ENCODE measurements at regions of chr5 and their contacts with region 1.

Region 1: GRCh38 chr5:177317959-177318377 is 6.3 kb upstream of the MXD3 start:
- DNase-seq: peak; percentile 80
- ATAC-seq: peak; percentile 92
- H3K4me3 ChIP-seq: no peak overlapping the region
- H3K27ac ChIP-seq: no peak overlapping the region
- H3K4me1 ChIP-seq: peaks cover under 1% of the 10 kb centered on the region; the same call in 1 of the 2 replicates
- H3K27me3 ChIP-seq: no peaks in the 10 kb centered on the region
- CTCF ChIP-seq: peak; percentile 95
- POLR2A ChIP-seq: no peak
- RAD21 ChIP-seq: peak; percentile 88

Region 2: DNA sequence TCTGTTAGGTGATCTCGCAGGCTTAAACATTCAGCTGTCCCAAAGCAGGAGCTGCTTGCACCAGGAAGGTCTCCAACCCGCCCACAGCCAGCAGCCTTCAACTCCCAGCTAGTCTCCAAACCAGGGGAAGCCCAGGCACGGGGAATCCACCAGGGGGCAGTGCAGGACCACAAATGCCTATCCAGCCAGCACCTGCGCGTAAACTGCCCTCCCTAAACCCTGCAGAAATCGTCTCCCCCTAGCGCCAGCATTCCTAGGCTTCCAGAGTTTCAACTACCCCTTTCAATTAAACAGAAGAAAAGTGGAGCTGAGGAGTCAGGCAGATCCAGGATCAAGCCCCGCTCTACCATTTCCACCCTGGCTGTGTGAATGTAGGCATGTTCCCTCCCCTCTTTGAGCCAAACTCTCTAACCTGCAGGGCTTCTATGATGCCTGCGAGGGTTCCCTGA is 1588.1 kb before region 1 on chr5:
- CTCF ChIA-PET with region 1: no interaction called
- POLR2A ChIA-PET with region 1: no interaction called
- dilution Hi-C with region 1: no loop called
- in situ Hi-C with region 1: no loop called
- intact Hi-C with region 1: no loop called
- DNase-seq: peak; percentile 85
- ATAC-seq: peak; percentile 99
- H3K4me3 ChIP-seq: no peak overlapping the region
- H3K27ac ChIP-seq: no peak overlapping the region
- H3K4me1 ChIP-seq: no peaks in the 10 kb centered on the region
- H3K27me3 ChIP-seq: no peaks in the 10 kb centered on the region; the same call in 1 of the 2 replicates
- CTCF ChIP-seq: peak; percentile 99
- POLR2A ChIP-seq: peak; percentile 60
- RAD21 ChIP-seq: peak; percentile 100

Region 3: GRCh38 chr5:176784218-176785165 is 533.5 kb before region 1 on chr5:
- CTCF ChIA-PET with region 1: no interaction called
- POLR2A ChIA-PET with region 1: no interaction called
- dilution Hi-C with region 1: no loop called
- in situ Hi-C with region 1: no loop called
- intact Hi-C with region 1: no loop called
- DNase-seq: peak; percentile 78
- ATAC-seq: peak; percentile 29; the same call in 1 of the 2 replicates
- H3K4me3 ChIP-seq: no peak overlapping the region
- H3K27ac ChIP-seq: no peak overlapping the region
- H3K4me1 ChIP-seq: peaks cover 2% of the 10 kb centered on the region; the same call in 1 of the 2 replicates
- H3K27me3 ChIP-seq: peaks cover 58% of the 10 kb centered on the region
- CTCF ChIP-seq: no peak
- POLR2A ChIP-seq: no peak
- RAD21 ChIP-seq: no peak

Region 4: GRCh38 chr5:177006265-177006972 is 311.5 kb before region 1 on chr5 and contains the start of gene UIMC1:
- CTCF ChIA-PET with region 1: no interaction called
- POLR2A ChIA-PET with region 1: no interaction called
- dilution Hi-C with region 1: no loop called
- in situ Hi-C with region 1: no loop called
- intact Hi-C with region 1: no loop called
- DNase-seq: peak; percentile 88
- ATAC-seq: peak; percentile 94
- H3K4me3 ChIP-seq: peak within 1 kb of the TSS; percentile 79
- H3K27ac ChIP-seq: peak within 1 kb of the TSS; percentile 91
- H3K4me1 ChIP-seq: peaks cover 5% of the 10 kb centered on the region; the same call in 1 of the 2 replicates
- H3K27me3 ChIP-seq: no peaks in the 10 kb centered on the region
- CTCF ChIP-seq: no peak
- POLR2A ChIP-seq: peak; percentile 76
- RAD21 ChIP-seq: no peak
- total RNA-seq, gene UIMC1: 23.1 and 27.6 TPM in 2 replicates

Region 5: DNA sequence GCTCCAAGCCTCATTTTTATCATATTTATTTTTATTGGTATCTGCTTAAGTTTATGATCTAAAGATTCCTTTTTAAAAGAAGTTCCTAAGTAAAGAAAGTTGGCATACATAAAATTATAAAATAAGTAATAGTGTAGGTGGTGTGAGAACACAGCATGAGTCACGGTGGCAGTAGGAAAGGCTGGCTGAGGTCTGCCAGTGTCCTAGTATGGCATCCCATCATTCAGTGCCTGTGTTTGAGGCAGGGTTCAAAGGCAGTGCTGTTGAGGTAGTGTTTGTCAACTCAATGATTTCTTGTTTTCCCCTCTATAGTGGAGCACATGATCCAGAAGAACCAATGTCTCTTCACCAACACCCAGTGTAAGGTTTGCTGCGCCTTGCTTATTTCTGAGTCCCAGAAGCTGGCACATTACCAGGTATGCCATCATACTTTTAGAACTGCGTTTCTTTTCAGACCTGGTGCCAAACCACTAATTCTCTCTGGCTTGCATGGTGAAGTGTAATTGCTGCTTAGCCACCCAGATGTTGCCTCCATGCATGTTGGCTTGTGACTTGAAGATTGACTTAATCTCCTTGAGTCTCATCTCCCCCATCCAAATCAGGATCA is 277.1 kb before region 1 on chr5:
- CTCF ChIA-PET with region 1: no interaction called
- POLR2A ChIA-PET with region 1: no interaction called
- dilution Hi-C with region 1: no loop called
- in situ Hi-C with region 1: no loop called
- intact Hi-C with region 1: no loop called
- DNase-seq: peak; percentile 45
- ATAC-seq: no peak; the same call in 1 of the 2 replicates
- H3K4me3 ChIP-seq: no peak overlapping the region
- H3K27ac ChIP-seq: no peak overlapping the region
- H3K4me1 ChIP-seq: peaks cover 2% of the 10 kb centered on the region
- H3K27me3 ChIP-seq: no peaks in the 10 kb centered on the region
- CTCF ChIP-seq: no peak
- POLR2A ChIP-seq: no peak
- RAD21 ChIP-seq: no peak

Region 6: GRCh38 chr5:177336112-177336511 is 18.1 kb after region 1 on chr5:
- CTCF ChIA-PET with region 1: no interaction called
- POLR2A ChIA-PET with region 1: no interaction called
- dilution Hi-C with region 1: no loop called
- in situ Hi-C with region 1: no loop called
- intact Hi-C with region 1: loop called (anchors 2 kb)
- DNase-seq: no peak
- ATAC-seq: peak; percentile 56
- H3K4me3 ChIP-seq: no peak overlapping the region
- H3K27ac ChIP-seq: no peak overlapping the region
- H3K4me1 ChIP-seq: no peaks in the 10 kb centered on the region
- H3K27me3 ChIP-seq: no peaks in the 10 kb centered on the region
- CTCF ChIP-seq: peak; percentile 43
- POLR2A ChIP-seq: no peak
- RAD21 ChIP-seq: peak; percentile 24; the same call in 1 of the 2 replicates

Region 7: DNA sequence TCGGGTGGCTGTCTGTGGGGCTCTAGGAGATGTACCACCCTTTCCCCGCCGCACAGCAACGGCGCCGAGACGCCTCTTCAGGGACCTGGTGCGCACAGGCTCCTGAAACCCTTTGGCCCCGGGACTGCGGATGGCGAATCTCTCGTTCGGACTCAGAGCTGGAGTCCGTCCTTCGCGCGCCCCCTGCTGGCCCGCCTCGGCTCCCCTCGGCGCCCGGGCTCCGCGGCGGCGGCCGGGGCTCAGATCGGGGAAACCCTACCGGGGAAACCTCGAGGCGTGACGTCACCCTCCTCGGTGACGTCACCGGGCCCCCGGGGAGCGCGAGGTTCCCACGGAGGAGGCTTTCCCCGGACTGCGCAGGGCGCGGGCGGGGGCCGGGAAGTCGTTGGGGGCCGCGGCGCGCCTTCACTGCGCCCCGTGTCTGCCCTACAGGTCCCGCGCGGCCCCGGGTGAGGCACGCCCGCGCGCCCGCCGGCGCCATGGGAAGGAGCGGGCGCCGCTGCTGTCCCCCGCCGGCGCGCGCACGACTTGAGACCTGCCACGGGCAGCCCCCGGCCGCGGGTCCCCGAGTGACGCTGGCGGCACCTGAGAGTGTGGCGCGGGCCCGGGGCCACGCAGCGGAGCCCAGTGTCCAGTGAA is 136.5 kb after region 1 on chr5:
- CTCF ChIA-PET with region 1: no interaction called
- POLR2A ChIA-PET with region 1: no interaction called
- dilution Hi-C with region 1: no loop called
- in situ Hi-C with region 1: loop called (anchors 5 kb)
- intact Hi-C with region 1: loop called (anchors 1 kb)
- DNase-seq: peak; percentile 80
- ATAC-seq: peak; percentile 58
- H3K4me3 ChIP-seq: peak overlapping the region; percentile 38
- H3K27ac ChIP-seq: no peak overlapping the region; the same call in 1 of the 2 replicates
- H3K4me1 ChIP-seq: peaks cover 8% of the 10 kb centered on the region
- H3K27me3 ChIP-seq: no peaks in the 10 kb centered on the region
- CTCF ChIP-seq: peak; percentile 99
- POLR2A ChIP-seq: 0 out of 2 replicates have a peak, but pooled peaks have one; percentile 24
- RAD21 ChIP-seq: peak; percentile 88